HEK293 (cell line): ENCODE measurements at regions of chr22 and their contacts with region 1.

Region 1: GRCh38 chr22:44068422-44069191 is 44.5 kb downstream of the PARVB start:
- H3K4me3 ChIP-seq: no peak overlapping the region
- H3K27ac ChIP-seq: no peak overlapping the region
- H3K4me1 ChIP-seq: no peaks in the 10 kb centered on the region
- CTCF ChIP-seq: no peak

Region 2: GRCh38 chr22:44057401-44057987 is 11.1 kb before region 1 on chr22:
- CTCF ChIA-PET with region 1: no interaction called
- POLR2A ChIA-PET with region 1: no interaction called
- H3K4me3 ChIP-seq: no peak overlapping the region
- H3K27ac ChIP-seq: no peak overlapping the region
- H3K4me1 ChIP-seq: no peaks in the 10 kb centered on the region
- CTCF ChIP-seq: no peak

Region 3: DNA sequence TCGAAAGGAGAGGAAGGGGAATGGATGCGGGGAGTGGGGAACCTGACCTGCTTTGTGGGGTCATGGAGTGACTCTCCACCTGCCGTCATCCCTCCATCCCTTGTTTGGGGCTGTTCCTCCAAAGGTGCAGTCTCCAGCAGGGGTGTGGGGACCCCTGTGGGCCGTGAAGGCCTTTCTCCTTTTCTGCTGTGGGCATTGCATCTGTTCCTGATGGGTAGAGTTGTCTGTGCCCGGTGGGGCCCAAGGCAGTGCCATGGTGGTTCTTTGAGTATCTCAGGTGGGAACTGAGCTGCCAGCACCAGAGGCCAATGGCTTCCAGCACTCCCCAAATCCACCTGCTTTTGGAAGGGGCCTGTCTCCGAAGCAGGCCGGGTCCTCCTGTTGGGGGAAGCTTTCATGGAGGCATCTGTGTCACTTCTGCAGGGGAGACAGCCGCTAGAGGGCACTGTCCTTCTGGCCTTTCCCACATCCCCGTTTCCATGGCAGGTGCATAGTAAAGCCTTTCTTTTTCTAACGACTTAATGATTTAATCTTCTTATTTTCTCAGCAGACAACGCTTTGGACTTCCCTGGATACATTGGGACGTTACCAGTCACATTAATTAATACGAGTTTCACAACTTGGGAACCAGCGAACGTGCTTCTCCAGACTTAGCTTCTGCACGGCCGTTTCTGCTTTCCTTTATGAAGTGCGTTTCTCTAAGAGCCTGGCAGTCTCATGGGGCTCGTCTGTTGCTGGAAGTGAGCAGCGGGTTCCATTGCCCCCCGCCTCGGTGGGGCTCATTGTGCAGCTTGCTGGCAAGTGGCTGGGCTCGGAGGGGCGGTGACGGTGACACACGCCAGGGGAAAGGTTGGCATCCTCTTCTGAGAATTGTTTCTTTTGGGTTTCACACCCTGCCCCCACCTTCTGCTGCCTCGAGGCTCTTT is 12.6 kb after region 1 on chr22:
- CTCF ChIA-PET with region 1: interaction called, 22 read pairs
- POLR2A ChIA-PET with region 1: no interaction called
- H3K4me3 ChIP-seq: no peak overlapping the region
- H3K27ac ChIP-seq: no peak overlapping the region
- H3K4me1 ChIP-seq: no peaks in the 10 kb centered on the region
- CTCF ChIP-seq: peak; percentile 75

Region 4: GRCh38 chr22:44094751-44095302 is 26.2 kb after region 1 on chr22:
- CTCF ChIA-PET with region 1: no interaction called
- POLR2A ChIA-PET with region 1: no interaction called
- H3K4me3 ChIP-seq: no peak overlapping the region
- H3K27ac ChIP-seq: no peak overlapping the region
- H3K4me1 ChIP-seq: no peaks in the 10 kb centered on the region
- CTCF ChIP-seq: no peak